AG04449 (cell line): ENCODE measurements at regions of chr2 and their contacts with region 1.

Region 1: DNA sequence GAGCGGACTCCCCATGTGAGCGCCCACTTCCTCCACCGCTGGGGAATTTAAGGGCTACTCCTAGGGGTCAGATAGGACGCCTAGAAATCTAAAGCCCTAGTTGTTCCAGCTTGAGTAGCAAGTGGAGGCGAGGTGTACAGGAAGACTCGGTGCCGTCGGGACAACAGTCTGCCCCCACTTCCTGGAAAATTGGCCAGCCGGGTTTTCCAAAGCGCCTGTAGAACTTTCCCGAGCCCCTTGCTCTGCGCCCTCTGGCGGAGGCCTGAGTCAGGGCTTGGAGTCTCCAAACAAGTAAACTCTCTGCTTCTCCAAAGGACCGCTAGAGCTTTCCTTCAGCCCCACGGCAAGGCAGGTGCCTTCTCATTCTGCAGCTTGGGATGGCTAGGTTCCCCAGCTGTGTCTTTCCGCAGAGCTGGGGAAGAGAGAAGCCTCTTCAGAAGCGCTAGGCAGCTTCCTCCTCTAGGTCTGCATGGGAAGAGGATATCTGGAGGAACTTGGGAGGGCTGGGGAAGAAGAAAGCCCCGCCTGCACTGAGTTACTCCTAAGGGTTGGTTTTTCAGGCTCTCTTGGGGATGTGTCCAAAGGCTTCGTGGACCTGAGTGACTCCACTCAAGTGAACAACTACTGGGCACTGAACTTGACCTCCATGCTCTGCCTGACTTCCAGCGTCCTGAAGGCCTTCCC is 688 bp downstream of the SPR start:
- DNase-seq: no peak
- H3K4me3 ChIP-seq: peak overlapping the region; percentile 67
- CTCF ChIP-seq: peak; percentile 90

Region 2: DNA sequence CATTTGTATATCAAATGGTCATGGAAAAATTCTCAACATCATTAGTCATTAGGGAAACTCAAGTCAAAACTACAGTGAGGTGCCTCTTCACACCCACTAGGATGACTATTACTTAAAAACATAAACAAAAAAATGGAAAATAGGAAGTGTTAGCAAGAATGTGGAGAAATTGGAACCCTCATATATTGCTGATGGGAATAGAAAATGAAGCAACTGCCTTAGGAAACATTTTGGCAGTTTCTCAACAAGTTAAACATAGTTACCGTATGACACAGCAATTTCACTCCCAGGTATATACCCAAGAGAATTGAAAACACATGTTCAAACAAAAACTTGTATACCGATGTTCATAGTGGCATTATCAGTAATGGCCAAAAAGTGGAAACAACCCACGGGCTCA is 722.1 kb before region 1 on chr2:
- CTCF ChIA-PET with region 1: no interaction called
- POLR2A ChIA-PET with region 1: no interaction called
- DNase-seq: no peak
- H3K4me3 ChIP-seq: no peak overlapping the region
- CTCF ChIP-seq: no peak

Region 3: DNA sequence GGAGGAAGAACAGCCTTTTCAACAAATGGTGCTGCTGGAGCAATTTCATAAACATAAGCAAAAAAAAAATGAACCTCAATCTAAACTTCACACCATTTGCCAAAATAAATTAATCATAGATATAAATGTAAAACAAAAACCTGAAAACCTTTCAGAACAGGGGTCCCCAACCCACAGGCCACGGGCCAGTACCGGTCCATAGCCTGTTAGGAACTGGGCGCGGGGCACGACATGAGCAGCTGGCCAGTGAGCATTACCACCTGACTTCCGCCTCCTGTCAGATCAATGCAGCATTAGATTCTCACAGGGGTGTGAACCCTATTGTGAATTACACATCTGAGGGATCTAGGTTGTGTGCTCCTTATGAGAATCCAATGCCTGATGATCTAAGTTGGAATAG is 238.1 kb before region 1 on chr2:
- CTCF ChIA-PET with region 1: no interaction called
- POLR2A ChIA-PET with region 1: no interaction called
- DNase-seq: no peak
- H3K4me3 ChIP-seq: no peak overlapping the region
- CTCF ChIP-seq: no peak

Region 4: GRCh38 chr2:72871880-72872279 is 16.0 kb before region 1 on chr2:
- CTCF ChIA-PET with region 1: interaction called, 22 read pairs
- POLR2A ChIA-PET with region 1: no interaction called
- DNase-seq: no peak
- H3K4me3 ChIP-seq: no peak overlapping the region
- CTCF ChIP-seq: no peak

Region 5: DNA sequence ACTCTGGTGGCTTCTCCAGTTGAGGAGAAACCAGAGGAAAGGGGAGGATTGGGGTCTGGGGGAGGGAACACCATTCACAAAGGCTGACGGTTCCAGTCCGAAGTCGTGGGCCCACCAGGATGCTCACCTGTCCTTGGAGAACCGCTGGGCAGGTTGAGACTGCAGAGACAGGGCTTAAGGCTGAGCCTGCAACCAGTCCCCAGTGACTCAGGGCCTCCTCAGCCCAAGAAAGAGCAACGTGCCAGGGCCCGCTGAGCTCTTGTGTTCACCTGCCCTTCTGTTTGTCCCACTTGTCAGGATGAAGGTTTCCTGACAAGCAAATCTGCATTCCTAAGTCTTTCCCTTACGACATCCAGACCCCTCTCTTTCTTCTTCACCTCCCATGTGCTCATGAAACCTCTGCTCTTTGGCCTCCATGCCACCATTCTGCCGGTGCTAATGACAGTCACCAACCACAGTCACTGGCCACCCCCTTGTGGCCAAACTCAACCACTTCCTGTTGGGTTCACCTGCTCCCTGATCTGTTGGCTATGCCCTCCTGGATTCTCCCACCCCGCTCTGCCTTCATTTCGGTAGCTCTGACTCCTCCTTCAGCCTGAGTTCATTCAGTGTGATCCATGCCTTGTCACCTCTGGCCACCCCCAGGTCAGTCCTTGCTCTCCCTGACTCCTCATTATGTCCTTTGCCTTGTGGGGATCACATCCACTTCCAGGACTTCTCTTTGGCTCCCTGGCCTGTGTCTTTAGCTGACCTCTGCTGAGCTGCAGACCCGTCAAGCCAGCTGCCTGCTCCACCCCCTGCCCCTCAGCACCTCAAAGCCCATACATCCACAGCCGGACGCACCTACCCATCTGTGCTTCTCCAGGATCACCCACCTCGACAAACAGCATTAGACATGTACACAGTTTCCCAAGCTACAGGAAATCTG is 47.1 kb after region 1 on chr2:
- CTCF ChIA-PET with region 1: interaction called, 18 read pairs
- POLR2A ChIA-PET with region 1: no interaction called
- DNase-seq: no peak
- H3K4me3 ChIP-seq: no peak overlapping the region
- CTCF ChIP-seq: no peak

Region 6: GRCh38 chr2:72973566-72974435 is 85.9 kb after region 1 on chr2:
- CTCF ChIA-PET with region 1: interaction called, 502 read pairs
- POLR2A ChIA-PET with region 1: no interaction called
- DNase-seq: no peak
- H3K4me3 ChIP-seq: no peak overlapping the region
- CTCF ChIP-seq: peak; percentile 91

Region 7: DNA sequence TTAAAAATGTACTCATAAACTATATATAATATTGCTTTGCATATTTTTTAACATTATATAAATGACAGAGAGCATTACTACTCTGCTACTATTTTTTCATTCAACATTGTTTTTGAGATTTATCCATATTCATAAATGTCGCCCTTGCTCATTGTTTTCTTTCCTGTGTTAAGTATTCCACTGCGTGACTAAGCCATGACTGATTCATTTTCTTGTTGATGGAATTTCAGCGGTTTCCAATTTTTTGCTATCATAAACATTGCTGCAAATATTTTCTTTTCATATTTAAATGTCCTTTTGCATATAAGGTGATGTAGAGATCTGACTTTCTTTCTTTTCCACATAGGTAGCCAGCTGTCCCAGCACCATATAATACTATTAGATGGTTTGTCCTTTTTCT is 126.0 kb after region 1 on chr2:
- CTCF ChIA-PET with region 1: interaction called, 13 read pairs
- POLR2A ChIA-PET with region 1: no interaction called
- DNase-seq: no peak
- H3K4me3 ChIP-seq: no peak overlapping the region
- CTCF ChIP-seq: no peak

Region 8: GRCh38 chr2:73085691-73086360 is 197.9 kb after region 1 on chr2:
- CTCF ChIA-PET with region 1: interaction called, 74 read pairs
- POLR2A ChIA-PET with region 1: no interaction called
- DNase-seq: no peak
- H3K4me3 ChIP-seq: no peak overlapping the region; the same call in 1 of the 2 replicates
- CTCF ChIP-seq: peak; percentile 96

Region 9: GRCh38 chr2:73212448-73213176 is 324.7 kb after region 1 on chr2:
- CTCF ChIA-PET with region 1: interaction called, 81 read pairs
- POLR2A ChIA-PET with region 1: no interaction called
- DNase-seq: peak; percentile 65
- H3K4me3 ChIP-seq: no peak overlapping the region
- CTCF ChIP-seq: peak; percentile 96